Heart left ventricle (tissue), 16 donors: ENCODE measurements at regions of chr9 and their contacts with region 1.

Region 1: GRCh38 chr9:38687387-38687842 is 32.5 kb downstream of the FAM240B start:
- DNase-seq: peak in 4 of 5 donors; percentile 28 to 79 (median 62)
- ATAC-seq: peak; percentile 47 to 91 (median 79)
- H3K4me3 ChIP-seq: peak overlapping the region in 9 of 12 donors; percentile 11 to 35 (median 27)
- H3K27ac ChIP-seq: no peak overlapping the region
- H3K4me1 ChIP-seq: peaks cover 0 to 20% (median 3%) of the 10 kb centered on the region in 12 donors
- H3K27me3 ChIP-seq: peaks cover 0 to 4% (median 0%) of the 10 kb centered on the region in 9 donors
- CTCF ChIP-seq: no peak
- POLR2A ChIP-seq: no peak

Region 2: DNA sequence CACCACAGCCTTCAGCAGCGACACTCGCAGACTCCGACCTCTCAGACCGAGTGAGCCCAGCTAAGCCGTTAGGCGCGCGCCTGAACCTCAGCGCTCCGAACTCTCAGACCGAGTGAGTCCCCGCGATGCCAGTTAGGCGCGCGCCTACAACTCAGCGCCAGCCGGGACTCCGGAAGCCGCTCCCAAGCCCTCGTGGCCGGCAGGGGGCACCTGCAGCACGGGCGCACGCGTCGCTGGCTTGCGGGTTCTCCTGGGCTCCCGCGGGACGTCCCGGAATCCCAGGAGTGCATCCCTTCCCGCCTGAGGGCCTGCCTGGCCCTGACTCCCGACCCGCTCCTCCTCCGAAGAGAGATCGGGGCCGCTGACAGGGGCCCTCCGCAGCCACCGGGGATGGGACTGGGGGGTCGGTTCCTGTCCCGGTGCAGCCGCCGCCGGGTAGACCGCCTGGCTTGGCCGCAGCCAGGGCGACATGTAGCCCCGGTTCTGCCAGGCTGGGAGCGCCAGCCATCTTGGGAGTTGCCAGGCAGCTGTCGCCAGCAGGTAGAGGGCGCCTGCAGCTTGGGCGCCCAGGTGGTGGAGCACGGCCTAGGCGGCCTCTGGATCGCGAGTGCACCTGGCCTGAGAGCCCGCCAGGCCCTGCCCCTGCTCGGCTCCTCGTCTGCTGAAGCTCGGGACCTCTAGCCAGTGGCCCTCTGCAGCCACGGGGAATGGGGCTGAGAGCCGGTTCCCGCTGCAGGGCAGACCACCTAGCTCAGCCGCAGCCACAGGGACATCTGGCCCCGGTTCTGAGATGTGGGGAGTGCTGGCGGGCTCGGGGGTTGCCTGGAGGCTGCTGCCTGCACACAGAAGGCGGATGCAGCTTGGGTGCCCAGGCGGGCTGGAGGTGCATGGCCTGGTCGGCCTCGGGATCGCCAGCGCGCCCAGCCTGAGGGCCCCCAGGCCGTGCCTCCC is 66.7 kb before region 1 on chr9 and contains the start of gene ANKRD18A:
- intact Hi-C with region 1: loop called in 1 of 10 experiments (anchors 10 kb)
- DNase-seq: peak; percentile 26 to 84 (median 79)
- ATAC-seq: peak; percentile 55 to 89 (median 87)
- H3K4me3 ChIP-seq: peak within 1 kb of the TSS; percentile 14 to 66 (median 49)
- H3K27ac ChIP-seq: peak within 1 kb of the TSS in 6 of 12 donors; percentile 2 to 68 (median 35)
- H3K4me1 ChIP-seq: peaks cover 0 to 31% (median 10%) of the 10 kb centered on the region in 12 donors
- H3K27me3 ChIP-seq: peaks cover 8 to 85% (median 41%) of the 10 kb centered on the region in 9 donors
- CTCF ChIP-seq: peak; percentile 31 to 57 (median 42)
- POLR2A ChIP-seq: no peak
- total RNA-seq, gene ANKRD18A: 0.20 to 6.8 (median 3.1) TPM

Region 3: GRCh38 chr9:38662763-38663593 is 24.4 kb before region 1 on chr9:
- intact Hi-C with region 1: loop called in 1 of 10 experiments (anchors 2 kb)
- DNase-seq: no peak
- ATAC-seq: peak in 3 of 4 donors; percentile 37 to 61 (median 47)
- H3K4me3 ChIP-seq: no peak overlapping the region
- H3K27ac ChIP-seq: no peak overlapping the region
- H3K4me1 ChIP-seq: no peaks in the 10 kb centered on the region
- H3K27me3 ChIP-seq: peaks cover 0 to 5% (median 0%) of the 10 kb centered on the region in 9 donors
- CTCF ChIP-seq: peak in 5 of 12 donors; percentile 11 to 43 (median 28)
- POLR2A ChIP-seq: no peak

Region 4: DNA sequence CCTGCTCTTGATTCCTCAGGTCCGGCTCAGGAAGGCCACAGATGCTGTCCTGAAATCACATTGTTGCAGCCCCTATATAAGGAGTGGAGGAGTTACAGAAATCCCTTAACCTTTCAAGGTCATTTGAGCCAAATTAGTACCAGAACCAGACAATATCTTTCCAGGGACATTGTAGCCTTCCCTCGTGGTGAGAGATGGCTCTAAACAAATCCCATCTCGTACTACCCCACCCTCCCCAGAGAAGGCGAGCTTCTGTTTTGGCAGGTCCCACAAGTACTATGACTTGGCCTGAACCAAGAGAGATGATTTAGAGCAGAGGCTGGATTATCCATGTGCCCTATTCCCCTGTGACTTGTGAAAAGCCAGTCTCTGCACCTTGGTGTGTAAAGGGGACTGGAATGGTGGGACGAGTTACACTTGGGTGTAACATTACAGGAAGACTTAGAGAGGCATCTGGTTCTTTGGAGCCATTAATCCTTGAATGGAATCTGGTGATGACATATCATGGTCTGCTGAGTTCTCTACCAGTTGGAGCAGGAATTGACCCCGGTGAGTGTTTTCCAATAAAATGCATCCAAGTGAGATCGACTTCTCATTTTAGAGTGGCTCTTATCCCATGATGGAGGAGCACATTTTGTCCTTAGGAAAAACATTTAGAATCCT is 32.8 kb after region 1 on chr9 and contains the start of gene FAM240B:
- intact Hi-C with region 1: no loop called
- DNase-seq: no peak
- ATAC-seq: no peak
- H3K4me3 ChIP-seq: no peak within 1 kb of the TSS
- H3K27ac ChIP-seq: no peak within 1 kb of the TSS
- H3K4me1 ChIP-seq: no peaks in the 10 kb centered on the region
- H3K27me3 ChIP-seq: no peaks in the 10 kb centered on the region
- CTCF ChIP-seq: no peak
- POLR2A ChIP-seq: no peak
- total RNA-seq, gene FAM240B: not detected

Region 5: DNA sequence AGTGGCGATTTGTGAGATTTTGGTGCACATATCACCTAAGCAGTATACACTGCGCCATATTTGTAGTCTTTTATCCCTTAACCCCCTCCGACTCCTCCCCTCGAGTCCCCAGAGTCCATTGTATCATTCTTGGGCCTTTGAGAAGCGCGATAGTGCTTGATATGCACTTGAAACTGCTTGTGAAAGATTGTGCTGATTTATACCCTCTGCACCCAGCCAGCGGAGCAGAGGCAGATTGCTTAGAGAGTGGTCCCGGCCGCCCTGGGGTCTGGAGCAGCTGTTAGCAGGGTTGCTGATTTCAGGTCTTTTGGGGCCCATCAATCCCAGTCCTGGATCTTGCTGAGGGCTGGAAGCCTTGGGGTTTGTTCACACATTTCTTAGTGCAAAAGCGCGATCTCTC is 45.5 kb after region 1 on chr9:
- intact Hi-C with region 1: loop called in 1 of 10 experiments (anchors 10 kb)
- DNase-seq: no peak
- ATAC-seq: no peak
- H3K4me3 ChIP-seq: no peak overlapping the region
- H3K27ac ChIP-seq: no peak overlapping the region
- H3K4me1 ChIP-seq: no peaks in the 10 kb centered on the region
- H3K27me3 ChIP-seq: no peaks in the 10 kb centered on the region
- CTCF ChIP-seq: no peak
- POLR2A ChIP-seq: no peak

Region 6: GRCh38 chr9:38747067-38747466 is 59.7 kb after region 1 on chr9:
- intact Hi-C with region 1: loop called in 2 of 10 experiments (anchors 10 kb)
- DNase-seq: no peak
- ATAC-seq: no peak
- H3K4me3 ChIP-seq: no peak overlapping the region
- H3K27ac ChIP-seq: no peak overlapping the region
- H3K4me1 ChIP-seq: no peaks in the 10 kb centered on the region
- H3K27me3 ChIP-seq: no peaks in the 10 kb centered on the region
- CTCF ChIP-seq: no peak
- POLR2A ChIP-seq: no peak

Region 7: DNA sequence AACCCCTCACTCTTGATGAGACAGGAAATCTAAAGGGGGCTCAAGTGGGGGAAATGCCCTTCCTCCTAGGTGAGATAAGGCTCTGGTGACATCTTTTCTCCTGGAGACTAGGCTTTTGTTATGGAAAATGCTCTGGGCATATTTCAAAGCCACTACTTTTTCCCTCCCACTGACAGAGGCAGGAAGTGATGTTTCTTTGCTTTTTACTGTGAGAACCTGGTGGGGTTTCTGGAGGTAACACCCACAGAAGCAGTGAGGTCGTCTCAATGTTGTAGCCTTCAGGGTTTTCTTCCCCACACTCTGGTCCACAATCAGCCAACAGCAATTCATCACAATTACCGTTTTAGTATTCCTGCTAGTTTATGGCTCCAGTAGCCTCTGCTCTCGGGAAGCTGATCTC is 73.9 kb after region 1 on chr9:
- intact Hi-C with region 1: loop called in 1 of 10 experiments (anchors 10 kb)
- DNase-seq: no peak
- ATAC-seq: no peak
- H3K4me3 ChIP-seq: no peak overlapping the region
- H3K27ac ChIP-seq: no peak overlapping the region
- H3K4me1 ChIP-seq: no peaks in the 10 kb centered on the region
- H3K27me3 ChIP-seq: no peaks in the 10 kb centered on the region
- CTCF ChIP-seq: no peak
- POLR2A ChIP-seq: no peak